Activated T-helper 2 cell treated with anti-CD3 and anti-CD28 coated beads, Interferon-gamma antibody, Interleukin-2, Interleukin-4, amounts not matched to agents 10 μg/mL and 5 μg/mL and 100 μg/mL, durations not matched to agents 14 hours and 24 hours and 36 hours (primary cell): ENCODE measurements at regions of chr12 and their contacts with region 1.

Region 1: DNA sequence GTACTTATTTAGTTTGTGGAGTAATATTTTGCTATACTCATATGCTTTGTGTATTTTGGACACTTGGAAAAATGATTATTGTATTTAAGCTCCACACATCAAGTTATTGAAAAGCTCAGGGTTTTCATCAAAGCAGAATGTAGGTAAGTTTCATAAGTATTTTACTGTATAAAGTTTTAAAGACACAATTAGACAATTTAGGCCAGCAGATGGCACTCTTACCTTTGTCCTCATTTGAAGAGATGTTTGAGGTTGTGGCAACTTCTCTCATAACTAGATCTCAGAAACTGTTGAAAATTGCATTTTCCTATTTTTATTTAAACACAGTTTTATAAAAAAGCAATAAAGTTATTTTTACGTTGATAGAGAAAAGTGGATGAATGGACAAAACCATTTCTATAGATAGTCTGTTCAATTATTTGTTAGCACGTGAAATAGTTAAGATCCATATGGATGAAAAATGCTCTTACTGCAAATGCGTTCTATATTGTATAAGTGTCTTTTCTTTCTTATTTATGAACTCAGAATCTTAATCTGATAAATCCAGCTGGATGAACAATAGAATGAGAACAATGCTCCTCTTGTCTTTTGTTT is 300.0 kb downstream of the AEBP2 start:
- DNase-seq: no peak
- H3K4me3 Mint-ChIP-seq: no peak overlapping the region
- H3K27ac Mint-ChIP-seq: no peak overlapping the region
- H3K4me1 Mint-ChIP-seq: no peaks in the 10 kb centered on the region
- H3K27me3 Mint-ChIP-seq: peaks cover 4% of the 10 kb centered on the region

Region 2: DNA sequence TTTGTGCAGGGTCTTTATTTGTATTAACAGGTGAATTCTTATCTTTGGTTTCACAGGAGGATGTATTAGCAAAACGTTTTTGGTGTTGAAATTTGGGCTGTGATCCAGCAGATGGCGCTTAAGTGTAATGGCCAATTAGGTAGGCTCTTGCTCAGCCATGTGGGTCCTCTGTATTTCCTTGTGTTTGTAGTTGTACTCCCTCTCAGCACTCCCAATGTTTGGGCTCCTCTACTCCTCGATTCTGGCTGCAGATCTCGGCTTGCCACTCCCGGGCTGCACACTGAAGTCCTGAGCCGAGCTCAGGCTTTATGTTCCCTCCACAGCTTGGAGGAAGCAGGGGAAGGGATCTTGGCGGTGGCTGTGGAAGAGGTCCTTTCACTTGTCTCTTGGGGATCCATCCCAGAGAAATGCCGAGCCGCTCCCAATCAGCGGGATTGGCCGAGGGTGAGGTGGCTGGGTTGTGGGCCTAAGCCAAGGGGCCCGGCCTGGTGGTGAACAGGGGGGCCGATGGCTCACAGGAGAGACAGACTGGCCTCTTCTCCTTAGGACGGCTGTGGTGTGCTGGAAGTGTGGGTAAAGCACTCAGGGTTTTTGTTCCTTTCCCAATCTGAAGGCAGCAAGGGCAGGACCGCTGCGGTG is 166.2 kb before region 1 on chr12:
- intact Hi-C with region 1: loop called (anchors 5 kb)
- DNase-seq: peak; percentile 16
- H3K4me3 Mint-ChIP-seq: no peak overlapping the region
- H3K27ac Mint-ChIP-seq: no peak overlapping the region
- H3K4me1 Mint-ChIP-seq: peaks cover 4% of the 10 kb centered on the region
- H3K27me3 Mint-ChIP-seq: no peaks in the 10 kb centered on the region

Region 3: DNA sequence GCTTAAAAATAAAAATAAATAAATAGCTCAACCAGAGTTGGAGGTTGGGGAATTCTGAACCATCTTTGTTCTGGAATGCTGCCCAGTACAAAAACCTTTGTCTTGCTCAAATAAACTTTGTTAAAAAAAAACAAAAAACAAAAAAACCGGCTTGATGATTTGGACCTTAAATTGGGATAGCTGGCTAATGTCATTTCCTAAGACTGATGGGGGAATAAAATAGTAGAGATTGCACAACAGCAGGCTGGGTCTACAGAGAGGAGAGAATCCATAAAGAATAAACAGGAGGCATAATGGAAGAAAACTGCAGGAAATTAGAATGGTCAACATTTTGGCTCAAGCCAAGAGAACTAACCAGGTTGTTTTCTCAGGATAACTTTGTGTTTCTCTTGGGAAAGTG is 70.9 kb after region 1 on chr12:
- intact Hi-C with region 1: no loop called
- DNase-seq: no peak
- H3K4me3 Mint-ChIP-seq: no peak overlapping the region
- H3K27ac Mint-ChIP-seq: no peak overlapping the region
- H3K4me1 Mint-ChIP-seq: peaks cover 4% of the 10 kb centered on the region
- H3K27me3 Mint-ChIP-seq: no peaks in the 10 kb centered on the region

Region 4: DNA sequence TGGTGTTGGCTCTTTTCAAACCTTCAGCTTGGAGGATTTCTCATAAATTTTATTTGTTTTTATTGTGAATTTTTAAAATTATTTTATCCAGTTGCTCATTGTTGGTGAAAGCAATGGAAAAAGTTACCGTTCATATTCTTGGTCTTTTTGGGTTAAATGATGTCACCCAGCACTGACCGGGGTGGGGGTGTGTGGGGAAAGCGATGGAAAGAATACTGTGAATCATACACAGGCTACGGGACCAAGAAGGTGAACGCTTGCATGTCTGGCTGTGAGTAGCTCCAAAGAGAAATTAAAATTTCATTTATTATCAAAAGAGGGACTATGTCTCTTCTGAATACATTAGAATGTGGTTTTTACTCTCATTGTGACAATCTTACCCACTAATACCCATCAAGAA is 130.1 kb after region 1 on chr12:
- intact Hi-C with region 1: no loop called
- DNase-seq: no peak
- H3K4me3 Mint-ChIP-seq: no peak overlapping the region
- H3K27ac Mint-ChIP-seq: no peak overlapping the region
- H3K4me1 Mint-ChIP-seq: no peaks in the 10 kb centered on the region
- H3K27me3 Mint-ChIP-seq: no peaks in the 10 kb centered on the region

Region 5: GRCh38 chr12:20220339-20220738 is 481.1 kb after region 1 on chr12:
- intact Hi-C with region 1: loop called (anchors 5 kb)
- DNase-seq: no peak
- H3K4me3 Mint-ChIP-seq: no peak overlapping the region
- H3K27ac Mint-ChIP-seq: no peak overlapping the region
- H3K4me1 Mint-ChIP-seq: no peaks in the 10 kb centered on the region
- H3K27me3 Mint-ChIP-seq: no peaks in the 10 kb centered on the region

Region 6: DNA sequence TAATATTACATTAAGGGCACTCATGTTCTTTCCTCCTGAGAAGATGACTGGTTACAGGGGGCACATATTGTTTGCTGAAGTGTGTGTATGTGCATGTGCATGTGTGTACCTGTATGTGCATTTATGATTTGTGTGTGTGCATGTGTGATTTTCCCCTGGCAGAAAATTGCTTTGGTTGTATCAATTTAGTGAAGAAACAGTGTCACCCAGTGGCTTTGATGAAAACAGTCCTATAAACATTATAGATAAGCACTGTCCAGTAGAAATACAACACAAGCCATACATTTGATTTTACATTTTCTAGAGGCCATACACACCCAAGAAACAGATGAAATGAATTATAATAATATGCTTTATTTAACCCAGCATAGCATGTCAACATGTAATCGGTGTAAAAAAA is 637.7 kb after region 1 on chr12:
- intact Hi-C with region 1: loop called (anchors 5 kb)
- DNase-seq: no peak
- H3K4me3 Mint-ChIP-seq: no peak overlapping the region
- H3K27ac Mint-ChIP-seq: no peak overlapping the region
- H3K4me1 Mint-ChIP-seq: no peaks in the 10 kb centered on the region
- H3K27me3 Mint-ChIP-seq: no peaks in the 10 kb centered on the region